WTC11 (cell line): ENCODE measurements at regions of chr13 and their contacts with region 1.

Region 1: DNA sequence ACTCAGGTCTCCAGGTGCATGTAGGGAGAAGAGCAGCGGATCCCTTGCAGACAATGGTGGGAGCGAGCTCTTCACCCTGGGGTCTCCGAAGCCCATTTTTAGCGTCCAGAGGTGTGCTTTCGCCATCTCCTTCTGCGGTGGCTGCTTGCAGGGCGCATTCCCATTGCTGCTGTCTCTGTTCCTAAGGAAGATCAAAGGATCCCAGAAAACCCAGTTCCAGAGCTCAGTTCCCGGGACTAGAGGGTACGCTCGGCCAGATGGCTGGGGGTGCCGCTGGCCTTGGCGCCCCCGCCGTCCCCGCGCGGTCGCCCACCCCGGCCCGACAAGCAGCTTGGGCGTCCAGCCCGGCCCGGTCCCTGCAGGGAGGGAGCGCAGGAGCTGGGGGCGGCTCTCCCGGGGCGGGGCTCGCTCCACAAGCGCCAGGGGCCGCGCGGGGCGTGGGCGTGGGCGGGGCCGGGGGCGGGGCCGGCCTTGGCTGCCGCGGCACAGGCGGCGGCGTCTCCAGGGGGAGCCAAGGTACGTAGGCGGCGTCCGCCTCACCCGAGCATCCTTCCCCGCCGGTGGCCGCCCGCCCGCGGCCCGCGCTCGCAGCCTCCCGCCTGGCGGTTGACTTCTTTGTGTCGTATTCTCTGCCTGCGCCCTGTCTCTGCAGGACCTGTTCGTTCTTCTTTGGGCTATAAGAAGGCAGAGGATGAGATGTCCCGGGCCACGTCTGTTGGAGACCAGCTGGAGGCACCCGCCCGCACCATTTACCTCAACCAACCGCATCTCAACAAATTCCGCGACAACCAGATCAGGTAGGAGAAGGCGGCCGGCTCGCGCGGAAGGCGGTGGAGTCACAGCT is 96.8 kb downstream of the ATP8A2 start:
- DNase-seq: peak; percentile 74
- ATAC-seq: peak; percentile 69
- H3K4me3 Mint-ChIP-seq: peak overlapping the region; percentile 89
- H3K27ac Mint-ChIP-seq: no peak overlapping the region
- H3K4me1 Mint-ChIP-seq: peaks cover 10% of the 10 kb centered on the region
- H3K27me3 Mint-ChIP-seq: peaks cover 44% of the 10 kb centered on the region
- CTCF ChIP-seq: no peak

Region 2: DNA sequence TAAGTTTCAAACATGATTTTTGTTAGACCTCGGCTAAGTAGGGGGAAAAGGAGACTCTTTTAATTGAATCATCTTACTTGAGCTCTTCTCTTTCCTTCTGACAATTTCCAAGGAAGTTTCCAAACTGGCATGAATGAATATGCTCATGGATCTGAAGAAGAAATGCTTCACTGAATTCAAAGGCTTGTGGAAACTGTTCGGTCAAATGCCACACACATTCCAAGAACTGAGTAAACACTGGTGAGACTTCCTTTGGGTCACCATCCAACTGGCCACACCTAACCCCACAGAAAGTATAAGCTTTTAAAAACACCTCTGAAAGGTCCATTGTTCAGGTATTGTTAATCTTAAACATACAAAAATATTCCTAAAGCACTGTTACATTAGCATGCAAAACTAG is 214.9 kb before region 1 on chr13:
- CTCF ChIA-PET with region 1: no interaction called
- POLR2A ChIA-PET with region 1: no interaction called
- DNase-seq: no peak
- ATAC-seq: no peak
- H3K4me3 Mint-ChIP-seq: no peak overlapping the region
- H3K27ac Mint-ChIP-seq: no peak overlapping the region
- H3K4me1 Mint-ChIP-seq: peaks cover 2% of the 10 kb centered on the region; the same call in 1 of the 2 replicates
- H3K27me3 Mint-ChIP-seq: no peaks in the 10 kb centered on the region
- CTCF ChIP-seq: no peak

Region 3: DNA sequence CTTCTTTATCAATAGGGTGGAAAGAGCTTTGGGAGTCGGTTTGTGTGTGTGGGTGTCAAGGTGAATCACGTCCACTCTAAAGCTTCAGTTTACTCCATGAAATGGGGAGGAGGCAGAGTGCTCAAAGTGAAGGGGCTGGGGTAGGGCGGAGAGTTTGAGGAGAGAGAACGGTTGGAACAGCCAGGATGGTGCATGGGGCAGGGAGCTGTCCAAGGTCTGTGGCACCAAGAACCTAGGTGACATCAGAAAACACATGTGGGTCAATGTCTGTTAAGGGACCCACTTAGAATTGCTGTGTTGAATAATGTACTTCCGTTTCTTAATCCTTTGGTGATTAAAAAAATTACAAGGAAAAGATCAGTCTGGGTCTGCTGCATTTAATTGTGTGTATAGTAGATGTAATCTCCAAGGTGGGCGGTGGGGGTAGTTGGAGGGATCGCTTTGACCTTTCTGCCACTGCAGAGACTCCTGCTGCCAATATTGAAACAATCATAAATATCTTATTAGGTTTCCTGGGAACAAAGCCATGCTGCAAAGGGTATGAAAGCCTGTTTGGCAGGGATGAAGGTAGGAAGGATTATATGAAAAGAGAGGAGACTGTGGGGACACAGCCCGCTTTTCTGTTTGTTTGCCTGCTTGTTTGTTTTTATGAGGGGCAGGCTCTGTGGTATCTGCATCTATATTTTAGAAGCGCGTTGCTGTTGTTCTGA is 25.5 kb after region 1 on chr13:
- CTCF ChIA-PET with region 1: interaction called, 12 read pairs
- POLR2A ChIA-PET with region 1: no interaction called
- DNase-seq: no peak
- ATAC-seq: peak; percentile 80
- H3K4me3 Mint-ChIP-seq: no peak overlapping the region
- H3K27ac Mint-ChIP-seq: no peak overlapping the region
- H3K4me1 Mint-ChIP-seq: peaks cover 27% of the 10 kb centered on the region
- H3K27me3 Mint-ChIP-seq: no peaks in the 10 kb centered on the region
- CTCF ChIP-seq: no peak